ENCODE measurements at regions of chr15 and their contacts with region 1.

Region 1: GRCh38 chr15:99981191-99981647 is 248.0 kb upstream of the LYSMD4 start:
- DNase-seq: no peak
- H3K4me3 ChIP-seq: no peak overlapping the region
- H3K27ac ChIP-seq: no peak overlapping the region
- H3K4me1 ChIP-seq: peaks cover 15 to 36% (median 25%) of the 10 kb centered on the region in 4 experiments
- H3K27me3 ChIP-seq: no peaks in the 10 kb centered on the region
- CTCF ChIP-seq: peak; percentile 38 to 71 (median 57)
- EP300 ChIP-seq: no peak
- POLR2A ChIP-seq: no peak
- RAD21 ChIP-seq: peak; percentile 47 to 56

Region 2: DNA sequence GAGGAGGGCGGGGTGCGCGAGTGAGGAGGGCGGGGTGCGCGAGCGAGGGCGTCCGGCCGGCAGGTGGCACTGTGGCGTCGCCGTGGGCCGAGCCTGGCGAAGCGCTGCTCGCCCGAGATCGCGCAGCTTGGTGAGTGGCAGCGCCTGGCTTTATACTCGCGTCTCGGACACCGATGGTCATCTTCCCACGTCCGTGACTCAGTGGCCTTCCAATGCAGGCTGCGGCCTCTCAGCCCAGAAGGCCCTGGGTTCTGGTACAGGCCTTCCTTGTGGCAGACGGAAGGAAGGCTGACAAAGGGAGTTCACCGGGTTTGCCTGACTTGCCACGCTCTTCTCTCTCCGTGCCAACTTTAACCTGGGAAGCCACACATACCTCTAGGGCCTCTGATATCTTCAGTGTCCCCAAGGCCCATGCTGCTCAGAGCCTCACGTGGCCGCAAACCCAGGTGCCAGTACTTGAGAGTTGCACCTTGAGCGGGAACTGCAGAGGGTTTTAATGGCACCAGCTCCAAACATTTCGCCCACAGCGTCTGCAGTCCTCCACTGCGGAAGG is 52.7 kb before region 1 on chr15:
- CTCF ChIA-PET with region 1: interaction called, 38 read pairs
- POLR2A ChIA-PET with region 1: interaction called, 4 read pairs
- DNase-seq: peak in 1 of 2 experiments; percentile 80
- H3K4me3 ChIP-seq: peak overlapping the region; percentile 51 to 80 (median 76)
- H3K27ac ChIP-seq: peak overlapping the region; percentile 45; the same call in 1 of the 2 replicates
- H3K4me1 ChIP-seq: peaks cover 5 to 13% (median 10%) of the 10 kb centered on the region in 4 experiments; a peak in 6 of 7 replicates
- H3K27me3 ChIP-seq: peaks cover 1 to 11% (median 8%) of the 10 kb centered on the region in 4 experiments; a peak in 6 of 7 replicates
- CTCF ChIP-seq: peak; percentile 34 to 76 (median 60); a peak in 3 of 4 replicates
- EP300 ChIP-seq: no peak
- POLR2A ChIP-seq: no peak
- RAD21 ChIP-seq: peak; percentile 56 to 68

Region 3: GRCh38 chr15:99961011-99961441 is 20.2 kb before region 1 on chr15:
- CTCF ChIA-PET with region 1: interaction called, 42 read pairs
- POLR2A ChIA-PET with region 1: no interaction called
- DNase-seq: peak in 1 of 2 experiments; percentile 77
- H3K4me3 ChIP-seq: no peak overlapping the region
- H3K27ac ChIP-seq: no peak overlapping the region
- H3K4me1 ChIP-seq: peaks cover 0 to 2% (median under 1%) of the 10 kb centered on the region in 4 experiments; a peak in 1 of 7 replicates
- H3K27me3 ChIP-seq: peaks cover 0 to 2% (median 0%) of the 10 kb centered on the region in 4 experiments; a peak in 1 of 7 replicates
- CTCF ChIP-seq: peak in 2 of 3 experiments; percentile 50 to 62; a peak in 3 of 4 replicates
- EP300 ChIP-seq: no peak
- POLR2A ChIP-seq: no peak
- RAD21 ChIP-seq: peak; percentile 65 to 72

Region 4: DNA sequence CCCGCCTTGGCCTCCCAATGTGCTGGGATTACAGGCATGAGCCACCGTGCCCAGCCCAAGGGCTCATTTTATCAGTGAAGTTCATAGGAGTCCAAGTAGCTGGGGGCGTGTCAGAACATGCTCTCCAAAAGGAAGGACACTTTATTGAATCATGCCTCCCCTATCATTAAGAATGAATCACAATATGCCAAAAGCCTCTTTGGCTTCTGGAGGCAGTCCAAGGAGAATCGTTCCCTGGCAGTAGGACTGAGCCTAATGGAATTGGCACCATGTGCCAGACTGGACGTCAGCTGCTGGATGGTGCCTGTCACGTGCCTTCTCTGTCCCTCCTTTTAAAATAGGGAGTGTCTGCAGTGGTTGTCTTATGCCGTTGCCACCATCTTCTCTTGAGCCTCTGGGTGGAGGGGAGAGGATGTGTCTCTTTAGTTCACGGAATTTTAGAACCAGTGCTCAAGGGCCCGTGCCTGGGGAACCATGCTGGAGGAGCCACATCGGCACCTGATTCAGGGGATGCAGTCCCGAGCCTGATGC is 13.3 kb before region 1 on chr15:
- CTCF ChIA-PET with region 1: interaction called, 42 read pairs
- POLR2A ChIA-PET with region 1: no interaction called
- DNase-seq: no peak
- H3K4me3 ChIP-seq: no peak overlapping the region
- H3K27ac ChIP-seq: no peak overlapping the region
- H3K4me1 ChIP-seq: no peaks in the 10 kb centered on the region; a peak in 1 of 7 replicates
- H3K27me3 ChIP-seq: no peaks in the 10 kb centered on the region
- CTCF ChIP-seq: no peak
- EP300 ChIP-seq: no peak
- POLR2A ChIP-seq: no peak
- RAD21 ChIP-seq: no peak

Region 5: DNA sequence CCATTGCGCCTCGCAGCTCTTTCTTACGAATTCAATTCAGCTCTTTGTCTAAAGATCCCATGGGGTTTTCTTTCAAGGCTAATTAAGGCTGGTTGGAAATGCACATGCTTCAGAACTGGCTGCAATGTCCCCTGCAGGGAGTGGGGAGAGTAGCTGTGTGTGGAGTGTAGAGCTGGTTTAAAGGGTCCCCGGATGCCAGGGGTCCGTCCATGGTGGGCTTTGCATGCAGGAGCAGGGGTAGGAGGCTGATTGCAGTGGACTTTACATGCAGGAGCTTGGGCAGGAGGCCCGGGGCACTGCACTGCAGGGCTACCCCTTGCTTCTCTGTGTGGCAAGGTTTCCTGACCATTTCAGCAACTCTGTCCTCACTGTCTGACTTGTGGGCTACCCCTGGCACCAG is 13.6 kb after region 1 on chr15:
- CTCF ChIA-PET with region 1: interaction called, 23 read pairs
- POLR2A ChIA-PET with region 1: interaction called, 18 read pairs
- DNase-seq: no peak
- H3K4me3 ChIP-seq: no peak overlapping the region
- H3K27ac ChIP-seq: no peak overlapping the region
- H3K4me1 ChIP-seq: peaks cover 4 to 17% (median 11%) of the 10 kb centered on the region in 4 experiments
- H3K27me3 ChIP-seq: no peaks in the 10 kb centered on the region; a peak in 1 of 7 replicates
- CTCF ChIP-seq: no peak
- EP300 ChIP-seq: no peak
- POLR2A ChIP-seq: no peak
- RAD21 ChIP-seq: no peak; a peak in 1 of 4 replicates